Left colon (tissue), 2 donors: ENCODE measurements at regions of chr22 and their contacts with region 1.

Region 1: GRCh38 chr22:35140879-35141745 is 75.2 kb downstream of the ISX start:
- DNase-seq: peak; percentile 54 to 82
- ATAC-seq: peak; percentile 83

Region 2: DNA sequence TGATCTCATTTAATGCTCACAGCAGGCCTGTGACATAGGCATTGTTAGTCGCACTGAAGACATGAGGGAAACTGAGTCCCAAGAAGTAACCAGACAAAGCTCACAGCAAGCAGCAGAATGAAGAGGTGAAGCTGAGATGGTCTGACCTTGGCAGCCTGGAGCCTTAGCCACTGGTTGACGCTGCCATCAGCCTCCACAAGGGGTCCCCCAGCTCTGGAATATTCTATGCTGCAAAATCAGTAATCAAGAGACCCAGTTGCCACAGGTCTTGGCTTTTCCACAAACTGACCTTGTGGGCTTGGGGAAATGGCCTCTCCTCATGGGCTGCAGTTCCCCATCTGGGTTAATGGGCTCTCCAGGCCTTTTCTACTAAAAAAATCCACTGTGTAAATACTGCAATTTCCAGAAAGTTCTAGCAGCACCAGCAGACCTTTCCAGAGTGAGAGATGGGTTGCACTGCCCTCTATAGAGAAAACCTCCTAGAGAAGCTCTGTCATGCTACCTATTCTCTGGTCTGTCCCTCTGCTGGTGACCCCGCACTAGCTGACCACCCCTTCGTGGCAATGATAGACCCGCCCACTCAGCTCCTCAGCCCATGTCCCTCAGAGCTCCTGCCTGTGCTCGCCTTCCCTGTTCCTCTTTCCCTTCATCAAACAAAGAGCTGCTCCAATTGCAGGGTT is 97.7 kb before region 1 on chr22:
- intact Hi-C with region 1: loop called in 1 of 2 experiments (anchors 5 kb)
- DNase-seq: no peak
- ATAC-seq: no peak

Region 3: GRCh38 chr22:35313311-35314121 is 172.4 kb after region 1 on chr22:
- intact Hi-C with region 1: no loop called
- DNase-seq: peak; percentile 37 to 45
- ATAC-seq: peak; percentile 19